Left colon (tissue), 2 donors: ENCODE measurements at regions of chr5 and their contacts with region 1.

Region 1: DNA sequence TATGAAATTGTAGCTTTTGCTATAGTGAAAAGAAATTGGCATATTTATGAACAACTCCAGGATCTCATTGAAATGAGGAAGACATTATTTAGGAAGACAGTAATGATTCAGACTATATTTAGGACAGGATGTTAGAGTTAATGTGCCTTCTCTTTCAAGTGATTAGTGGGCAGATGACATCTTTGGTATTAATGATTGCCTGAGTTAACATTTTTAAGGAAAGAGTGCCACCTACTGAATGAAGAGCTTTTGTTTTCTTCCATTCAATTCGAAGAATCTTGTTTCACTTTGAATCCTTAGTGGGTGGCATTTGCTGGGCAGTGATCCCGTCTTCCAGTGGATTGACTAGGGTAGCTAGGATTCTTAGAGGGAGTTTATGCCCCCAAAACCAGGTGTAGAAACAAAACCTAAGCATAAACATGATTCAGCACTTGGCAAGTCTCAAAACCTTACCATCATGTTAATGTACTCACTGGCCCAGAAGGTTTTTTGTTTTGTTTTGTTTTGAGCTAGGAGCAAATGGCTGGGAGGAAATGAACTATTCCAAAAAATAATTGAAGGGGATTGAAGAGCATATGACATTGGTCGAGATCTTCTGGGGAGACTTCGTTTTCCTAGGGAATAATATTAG is 23.2 kb downstream of the MAP3K1 start:
- DNase-seq: no peak
- ATAC-seq: peak; percentile 52

Region 2: GRCh38 chr5:55936100-55936693 is 902.3 kb before region 1 on chr5:
- intact Hi-C with region 1: loop called in 1 of 2 experiments (anchors 10 kb)
- DNase-seq: peak; percentile 64 to 86
- ATAC-seq: peak; percentile 84

Region 3: DNA sequence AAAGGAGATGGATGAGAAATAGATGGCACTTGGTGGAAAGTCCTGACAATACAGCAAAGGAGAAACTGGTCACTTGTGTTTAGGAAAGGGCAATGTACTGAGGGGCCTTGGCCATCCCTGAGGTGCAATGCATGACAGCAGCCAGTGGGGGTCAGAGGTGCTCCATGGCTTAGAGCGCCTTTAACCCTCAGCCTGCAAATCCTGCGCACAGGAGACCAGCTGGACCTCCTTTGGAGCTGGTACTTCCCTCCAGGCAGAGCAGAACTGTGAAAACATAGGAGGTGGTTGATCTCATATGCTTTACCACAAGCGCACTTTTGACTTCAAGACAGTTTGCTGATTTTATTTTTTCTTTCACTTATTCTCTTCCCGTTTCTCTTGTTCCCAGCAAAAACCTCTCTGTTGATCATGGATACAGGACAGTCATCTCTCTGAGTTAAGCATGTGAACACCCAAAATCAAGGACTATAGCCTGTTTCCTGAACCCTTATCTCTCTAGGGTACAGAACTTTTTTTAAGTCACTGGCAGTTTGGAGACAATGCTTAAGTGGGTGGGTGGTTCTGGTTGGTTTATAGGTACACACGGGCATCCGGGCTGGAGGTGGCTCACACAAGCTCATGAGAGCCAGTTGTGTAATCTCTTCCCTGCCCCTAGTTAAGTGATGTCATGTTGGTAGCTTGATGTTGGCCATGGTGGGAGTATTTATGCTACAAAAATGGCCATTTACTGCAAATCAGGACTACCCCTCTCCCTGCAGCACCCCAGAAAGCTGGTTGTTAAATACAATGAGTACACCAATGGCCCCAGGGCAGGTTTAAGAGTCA is 567.7 kb before region 1 on chr5:
- intact Hi-C with region 1: loop called (anchors 5 to 10 kb)
- DNase-seq: peak; percentile 65 to 77
- ATAC-seq: peak; percentile 99

Region 4: GRCh38 chr5:57067597-57067924 is 229.0 kb after region 1 on chr5:
- intact Hi-C with region 1: no loop called
- DNase-seq: no peak
- ATAC-seq: no peak

Region 5: DNA sequence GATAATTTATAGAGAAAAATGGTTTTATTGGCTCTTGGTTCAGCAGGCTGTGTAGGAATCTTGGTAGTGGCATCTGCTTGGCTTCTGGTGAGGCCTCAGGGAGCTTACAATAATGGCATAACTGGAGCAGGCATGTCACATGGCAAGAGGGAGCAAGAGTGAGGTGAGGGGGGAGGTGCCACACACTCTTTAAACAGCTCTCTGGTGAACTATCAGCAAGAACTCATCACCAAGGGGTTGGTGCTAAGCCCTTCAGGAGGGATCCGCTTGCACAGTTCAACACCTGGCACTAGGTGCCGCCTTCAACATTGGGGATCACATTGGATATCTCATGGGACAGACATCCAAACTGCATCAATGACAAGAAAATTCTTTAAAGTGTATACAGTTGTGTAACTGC is 345.8 kb after region 1 on chr5:
- intact Hi-C with region 1: no loop called
- DNase-seq: no peak
- ATAC-seq: peak; percentile 34